Activated CD4-positive, alpha-beta memory T cell treated with anti-CD3 and anti-CD28 coated beads for 36 hours (primary cell): ENCODE measurements at regions of chr13 and their contacts with region 1.

Region 1: GRCh38 chr13:30371649-30372265 is 50.5 kb upstream of the UBE2L5 start:
- DNase-seq: peak; percentile 84
- H3K4me3 Mint-ChIP-seq: peak overlapping the region; percentile 55
- H3K27ac Mint-ChIP-seq: peak overlapping the region; percentile 82
- H3K4me1 Mint-ChIP-seq: peaks cover 79% of the 10 kb centered on the region
- H3K27me3 Mint-ChIP-seq: no peaks in the 10 kb centered on the region

Region 2: DNA sequence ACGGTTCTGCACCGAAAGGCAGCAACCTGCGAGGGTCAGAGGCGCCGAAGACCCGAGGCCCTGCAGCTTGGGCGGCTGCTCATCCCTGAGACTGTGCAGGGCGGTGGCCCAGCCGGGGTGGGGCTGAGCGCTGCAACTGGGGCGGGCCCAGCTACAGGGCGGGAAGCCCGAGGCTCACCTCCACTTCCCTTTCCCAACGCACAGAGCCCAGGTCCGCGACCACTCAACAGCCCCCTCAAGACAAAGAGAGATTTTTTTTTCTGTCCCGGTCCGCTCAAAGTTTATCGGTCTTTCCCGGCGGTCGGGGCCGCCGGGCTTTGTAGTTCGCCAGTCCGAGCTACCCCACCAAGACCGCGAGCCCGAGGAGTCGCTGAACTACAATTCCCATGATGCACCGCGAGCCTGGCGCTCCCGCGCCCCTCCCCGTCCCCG is 65.0 kb before region 1 on chr13:
- CTCF ChIA-PET with region 1: no interaction called
- POLR2A ChIA-PET with region 1: interaction called, 5 read pairs
- intact Hi-C with region 1: loop called (anchors 2 kb)
- DNase-seq: peak; percentile 94
- H3K4me3 Mint-ChIP-seq: peak overlapping the region; percentile 84
- H3K27ac Mint-ChIP-seq: peak overlapping the region; percentile 87
- H3K4me1 Mint-ChIP-seq: peaks cover 49% of the 10 kb centered on the region
- H3K27me3 Mint-ChIP-seq: no peaks in the 10 kb centered on the region

Region 3: DNA sequence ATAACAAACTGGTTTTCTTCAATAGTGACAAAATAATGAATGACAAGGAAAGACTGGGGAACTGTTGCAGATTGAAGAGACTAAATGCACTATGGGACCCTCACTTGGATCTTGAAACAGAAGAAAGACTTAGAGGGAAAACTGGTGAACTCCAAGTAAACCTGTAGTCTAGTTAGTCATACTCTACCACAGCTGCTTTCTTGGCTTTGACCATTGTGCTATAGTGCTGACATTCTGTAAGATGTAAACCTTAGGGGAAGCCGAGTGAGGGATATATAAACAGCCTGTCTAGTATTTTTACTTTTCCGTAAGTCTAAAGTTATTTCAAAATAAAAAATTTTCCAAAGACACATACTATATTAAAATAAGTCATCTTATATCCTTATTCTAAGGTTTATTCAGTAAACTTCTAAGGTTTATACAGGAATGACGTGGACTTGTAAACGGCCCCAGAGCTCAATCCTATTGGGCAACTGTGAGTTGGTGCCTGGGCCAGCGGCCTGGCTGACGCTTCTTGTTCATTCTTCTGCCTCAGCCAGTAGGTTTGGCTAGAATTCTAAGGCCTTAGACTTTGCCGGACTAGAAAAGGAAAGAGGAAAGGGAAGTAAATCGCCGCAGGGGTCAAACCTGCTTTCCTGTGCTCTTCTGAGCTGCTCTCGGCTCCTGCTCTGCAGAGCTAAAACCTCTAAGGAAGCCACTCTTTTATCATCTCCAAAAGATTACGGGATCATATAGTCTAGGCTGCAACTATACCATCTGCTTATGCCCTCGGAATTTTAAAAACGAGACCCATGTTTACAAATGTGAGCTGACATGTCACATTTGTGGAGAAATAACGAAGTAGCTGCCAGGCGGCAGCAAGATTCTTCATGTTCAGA is 16.9 kb after region 1 on chr13:
- CTCF ChIA-PET with region 1: interaction called, 7 read pairs
- POLR2A ChIA-PET with region 1: interaction called, 14 read pairs
- intact Hi-C with region 1: no loop called
- DNase-seq: no peak
- H3K4me3 Mint-ChIP-seq: peak overlapping the region; percentile 65
- H3K27ac Mint-ChIP-seq: peak overlapping the region; percentile 71
- H3K4me1 Mint-ChIP-seq: peaks cover 23% of the 10 kb centered on the region
- H3K27me3 Mint-ChIP-seq: no peaks in the 10 kb centered on the region

Region 4: GRCh38 chr13:30395192-30396084 is 23.7 kb after region 1 on chr13:
- CTCF ChIA-PET with region 1: interaction called, 10 read pairs
- POLR2A ChIA-PET with region 1: interaction called, 6 read pairs
- intact Hi-C with region 1: loop called (anchors 1 kb)
- DNase-seq: peak; percentile 85
- H3K4me3 Mint-ChIP-seq: peak overlapping the region; percentile 81
- H3K27ac Mint-ChIP-seq: peak overlapping the region; percentile 83
- H3K4me1 Mint-ChIP-seq: peaks cover 23% of the 10 kb centered on the region
- H3K27me3 Mint-ChIP-seq: no peaks in the 10 kb centered on the region

Region 5: DNA sequence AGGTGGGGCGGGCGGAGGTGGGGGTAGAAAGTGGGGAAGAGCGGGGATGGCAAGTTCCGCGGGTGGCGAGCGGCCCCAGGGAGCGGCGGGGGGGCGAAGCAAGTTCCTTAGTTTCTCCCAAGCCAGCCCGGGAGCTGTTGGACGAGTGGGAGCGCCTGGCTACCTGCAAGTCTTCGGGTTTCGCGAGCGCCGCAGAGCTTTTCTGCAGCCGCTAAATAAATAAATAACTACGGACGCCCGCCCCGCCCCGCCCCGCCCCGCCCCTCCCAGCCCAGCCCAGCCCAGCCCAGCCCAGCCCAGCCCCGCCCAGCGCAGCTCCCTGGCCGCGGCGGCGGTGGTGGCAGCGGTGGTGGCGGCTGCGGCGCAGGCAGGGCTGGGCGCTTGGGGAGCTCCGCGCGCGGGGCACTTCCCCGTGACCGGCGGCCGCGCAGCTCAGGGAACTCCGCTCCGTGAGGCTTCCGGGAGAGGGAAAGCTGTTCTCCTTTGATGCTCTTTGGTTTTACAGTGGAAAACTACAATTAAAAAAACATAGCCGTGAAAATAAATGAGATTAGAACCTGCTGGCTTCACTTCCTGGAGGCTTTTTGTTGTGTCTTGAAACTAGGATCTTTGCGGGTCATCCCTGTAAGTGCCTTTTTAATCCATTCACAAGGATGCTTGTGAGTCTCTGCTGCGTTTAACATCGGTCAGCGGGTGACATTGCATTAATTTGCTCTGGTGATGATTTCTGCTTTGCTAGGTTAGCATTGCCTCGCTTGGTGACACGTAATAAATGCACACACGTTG is 50.5 kb after region 1 on chr13 and contains the start of gene UBE2L5:
- CTCF ChIA-PET with region 1: interaction called, 3 read pairs
- POLR2A ChIA-PET with region 1: interaction called, 5 read pairs
- intact Hi-C with region 1: loop called (anchors 2 kb)
- DNase-seq: peak; percentile 77
- H3K4me3 Mint-ChIP-seq: peak within 1 kb of the TSS; percentile 86
- H3K27ac Mint-ChIP-seq: peak within 1 kb of the TSS; percentile 80
- H3K4me1 Mint-ChIP-seq: peaks cover 12% of the 10 kb centered on the region
- H3K27me3 Mint-ChIP-seq: no peaks in the 10 kb centered on the region
- total RNA-seq, gene UBE2L5: not detected

Region 6: GRCh38 chr13:30429721-30430694 is 58.3 kb after region 1 on chr13:
- CTCF ChIA-PET with region 1: interaction called, 9 read pairs
- POLR2A ChIA-PET with region 1: interaction called, 3 read pairs
- intact Hi-C with region 1: loop called (anchors 1 kb)
- DNase-seq: peak; percentile 47
- H3K4me3 Mint-ChIP-seq: peak overlapping the region; percentile 61
- H3K27ac Mint-ChIP-seq: peak overlapping the region; percentile 86
- H3K4me1 Mint-ChIP-seq: peaks cover 26% of the 10 kb centered on the region
- H3K27me3 Mint-ChIP-seq: no peaks in the 10 kb centered on the region

Region 7: DNA sequence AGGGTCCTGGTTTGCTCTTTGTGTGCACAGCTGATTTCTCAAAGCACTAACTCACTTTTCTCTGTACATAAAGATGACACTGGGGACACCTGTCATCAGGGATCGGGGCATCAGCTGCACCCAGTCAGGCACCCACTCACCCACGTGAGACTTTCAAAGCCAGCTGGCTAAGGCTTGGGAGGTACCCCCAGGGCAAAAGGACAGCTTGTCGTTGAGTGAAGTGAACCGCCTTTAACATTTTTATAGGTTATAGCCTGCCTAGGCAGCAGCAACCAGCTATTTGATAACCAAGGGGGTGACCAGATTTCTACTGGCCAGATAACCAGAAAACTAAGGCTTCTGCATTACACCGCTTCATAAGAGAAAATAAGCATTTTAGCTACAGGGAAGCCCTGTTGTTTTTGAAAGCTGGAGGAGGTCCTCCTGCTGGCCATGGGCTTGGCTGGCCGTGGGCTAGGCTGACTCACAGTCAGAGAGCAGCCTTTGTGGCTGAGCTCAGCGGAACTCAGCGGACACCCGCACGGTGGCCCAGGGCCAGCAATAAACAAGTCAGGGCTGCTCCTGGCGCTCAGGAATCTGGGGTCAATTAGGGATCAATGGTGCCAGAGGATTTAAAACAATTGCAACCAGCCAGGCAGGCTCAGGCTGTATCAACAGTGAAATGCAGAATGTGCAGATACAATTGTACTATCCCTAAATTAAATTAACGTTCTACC is 420.7 kb after region 1 on chr13:
- CTCF ChIA-PET with region 1: no interaction called
- POLR2A ChIA-PET with region 1: no interaction called
- intact Hi-C with region 1: loop called (anchors 10 kb)
- DNase-seq: no peak
- H3K4me3 Mint-ChIP-seq: no peak overlapping the region
- H3K27ac Mint-ChIP-seq: no peak overlapping the region
- H3K4me1 Mint-ChIP-seq: peaks cover 35% of the 10 kb centered on the region
- H3K27me3 Mint-ChIP-seq: no peaks in the 10 kb centered on the region